Dorsolateral prefrontal cortex (tissue), 120 donors: ENCODE measurements at regions of chr11 and their contacts with region 1.

Region 1: GRCh38 chr11:64846998-64847666 is 2.7 kb upstream of the CDC42BPG start:
- DNase-seq: peak; percentile 81 to 98 (median 88)
- H3K4me3 ChIP-seq: peak overlapping the region in 6 of 59 donors; percentile 2 to 21 (median 10)
- H3K27ac ChIP-seq: peak overlapping the region in 3 of 59 donors; percentile 39 to 92 (median 60)
- H3K27me3 ChIP-seq: peaks cover 0 to 15% (median 0%) of the 10 kb centered on the region in 45 donors
- CTCF ChIP-seq: peak; percentile 86 to 100 (median 98)

Region 2: DNA sequence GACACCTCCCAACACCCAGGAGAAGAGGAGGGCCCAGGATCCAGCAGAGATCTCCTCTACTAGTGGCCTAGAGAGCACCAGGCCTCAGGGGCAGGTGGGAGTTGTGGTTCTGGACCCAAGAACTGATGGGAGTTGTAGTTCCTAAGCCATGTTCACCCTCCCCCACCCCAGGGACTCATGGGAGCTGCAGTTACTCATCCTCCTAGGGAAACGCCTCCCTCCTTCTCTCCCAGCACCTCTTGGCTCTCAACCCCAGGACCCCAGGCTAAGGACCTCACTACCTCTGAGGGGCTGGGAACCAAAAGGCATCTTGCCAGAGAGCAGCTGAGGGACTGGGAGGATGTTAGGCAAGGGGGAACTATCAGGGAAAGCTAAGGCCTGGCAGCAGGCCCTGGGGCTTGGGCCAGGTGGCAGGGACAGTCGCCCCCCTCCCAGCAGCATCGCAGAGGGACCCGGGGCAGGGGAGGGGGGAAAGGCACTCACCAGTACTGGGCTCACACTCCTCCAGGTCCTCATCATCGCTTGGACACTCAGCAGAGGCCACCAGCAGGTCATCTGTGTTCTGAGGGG is 227.2 kb before region 1 on chr11:
- intact Hi-C with region 1: no loop called
- DNase-seq: peak in 5 of 10 donors; percentile 42 to 85 (median 60)
- H3K4me3 ChIP-seq: peak overlapping the region in 3 of 59 donors; percentile 3 to 30 (median 15)
- H3K27ac ChIP-seq: peak overlapping the region in 53 of 59 donors; percentile 19 to 91 (median 64)
- H3K27me3 ChIP-seq: no peaks in the 10 kb centered on the region
- CTCF ChIP-seq: no peak

Region 3: DNA sequence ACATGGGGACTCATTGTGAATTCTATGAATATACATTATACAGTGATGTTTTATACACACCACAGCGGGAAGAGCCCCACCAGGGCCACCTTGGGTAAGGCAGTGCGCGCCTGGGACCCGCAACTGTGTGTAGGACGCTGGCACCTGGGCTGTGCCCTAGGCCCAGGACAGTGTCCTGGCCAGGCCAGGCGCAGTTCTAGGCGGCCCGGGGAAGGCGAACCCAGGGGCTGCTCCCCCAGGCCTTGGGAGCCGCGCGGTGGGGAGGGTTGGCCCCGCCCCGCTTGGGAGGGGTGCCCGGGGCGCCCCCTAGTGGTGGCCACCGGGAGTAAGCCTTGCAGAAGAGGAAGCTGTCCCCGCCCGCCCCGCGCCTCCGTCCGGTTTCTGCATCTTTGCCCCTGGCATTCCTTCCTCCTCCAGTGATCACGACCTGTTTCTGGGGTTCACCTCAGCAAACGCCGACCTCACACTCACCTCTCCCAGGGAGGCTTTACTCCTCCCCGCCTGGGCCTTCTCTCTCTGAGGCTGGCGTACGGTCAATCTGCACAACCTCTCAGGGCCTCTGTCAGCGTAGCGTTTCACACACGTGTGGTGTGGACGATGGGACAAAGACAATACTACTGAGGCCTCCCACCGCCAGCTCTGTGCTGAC is 40.7 kb after region 1 on chr11:
- intact Hi-C with region 1: loop called in 1 of 2 experiments (anchors 2 kb)
- DNase-seq: peak in 9 of 10 donors; percentile 60 to 88 (median 72)
- H3K4me3 ChIP-seq: peak overlapping the region in 55 of 59 donors; percentile 2 to 63 (median 37)
- H3K27ac ChIP-seq: peak overlapping the region in 28 of 59 donors; percentile 19 to 80 (median 60)
- H3K27me3 ChIP-seq: no peaks in the 10 kb centered on the region
- CTCF ChIP-seq: peak; percentile 75 to 99 (median 96)

Region 4: DNA sequence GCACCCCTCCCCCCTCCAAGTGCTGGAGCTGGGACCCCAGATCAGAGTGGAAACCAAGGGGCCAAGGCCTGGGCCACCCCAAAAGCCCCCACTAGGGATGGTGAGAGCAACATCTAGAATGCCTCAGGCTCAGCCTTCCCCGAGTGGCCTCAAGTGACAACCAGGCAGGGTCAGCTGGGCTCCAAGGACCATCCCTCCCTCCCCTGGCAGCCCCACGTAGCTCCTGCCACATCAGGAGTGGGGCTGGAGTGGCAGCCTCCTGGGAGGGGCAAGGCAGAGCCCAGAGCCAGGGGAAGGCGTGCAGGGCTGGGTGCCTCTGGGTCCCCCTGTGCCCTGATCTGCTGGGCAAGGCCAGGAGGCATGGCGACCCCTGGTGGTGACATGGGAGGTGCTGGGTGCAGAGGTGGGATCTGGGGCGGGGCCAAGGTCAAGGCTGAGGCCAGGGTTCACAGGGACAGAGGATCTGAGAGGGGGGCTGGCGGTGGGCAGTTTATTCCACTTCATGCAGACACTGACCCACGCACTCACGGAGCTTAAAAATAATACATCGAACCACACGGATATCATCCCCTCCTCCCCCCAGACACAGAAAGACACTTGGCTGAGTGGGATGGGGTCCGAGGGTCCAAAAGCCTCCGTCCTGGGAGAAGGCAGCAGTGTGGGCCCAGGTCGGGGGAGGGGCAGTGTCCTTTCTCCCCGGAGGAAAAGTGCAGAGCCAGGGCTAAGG is 47.1 kb after region 1 on chr11:
- intact Hi-C with region 1: loop called (anchors 1 to 2 kb)
- DNase-seq: peak; percentile 56 to 80 (median 75)
- H3K4me3 ChIP-seq: no peak overlapping the region
- H3K27ac ChIP-seq: peak overlapping the region in 15 of 59 donors; percentile 10 to 66 (median 45)
- H3K27me3 ChIP-seq: no peaks in the 10 kb centered on the region
- CTCF ChIP-seq: peak; percentile 33 to 93 (median 84)